ENCODE measurements at regions of chr14 and their contacts with region 1.

Region 1: DNA sequence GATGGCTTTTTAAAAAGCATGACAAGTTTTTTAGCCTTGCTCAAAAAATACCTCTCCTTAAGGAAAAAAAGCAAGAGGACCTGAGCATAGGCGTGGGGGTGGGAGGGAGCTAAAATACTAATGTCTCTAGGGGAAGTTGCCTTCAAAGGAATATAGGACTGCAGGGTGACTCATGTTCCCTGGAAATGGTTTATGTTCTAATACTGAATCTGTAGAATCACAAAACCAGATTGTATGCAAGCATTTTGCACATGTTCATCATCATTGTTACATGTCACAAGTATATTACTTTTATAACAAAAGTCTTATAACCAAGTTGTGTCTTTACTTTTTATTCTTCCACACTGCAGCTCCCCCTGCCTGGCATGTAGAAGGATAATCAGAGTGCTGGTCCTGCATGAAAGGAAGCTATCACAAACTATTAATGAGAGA is 36.6 kb downstream of the GPR135 start:
- DNase-seq: no peak
- H3K4me3 ChIP-seq: no peak overlapping the region
- H3K27ac ChIP-seq: peak overlapping the region; percentile 80
- H3K4me1 ChIP-seq: peaks cover 54% of the 10 kb centered on the region
- H3K27me3 ChIP-seq: no peaks in the 10 kb centered on the region
- CTCF ChIP-seq: peak; percentile 58

Region 2: GRCh38 chr14:59377991-59378601 is 50.5 kb before region 1 on chr14:
- intact Hi-C with region 1: loop called (anchors 10 kb)
- DNase-seq: no peak
- H3K4me3 ChIP-seq: no peak overlapping the region
- H3K27ac ChIP-seq: peak overlapping the region; percentile 70
- H3K4me1 ChIP-seq: peaks cover 39% of the 10 kb centered on the region
- H3K27me3 ChIP-seq: no peaks in the 10 kb centered on the region
- CTCF ChIP-seq: no peak

Region 3: GRCh38 chr14:59507063-59507780 is 78.6 kb after region 1 on chr14:
- intact Hi-C with region 1: no loop called
- DNase-seq: peak; percentile 24
- H3K4me3 ChIP-seq: no peak overlapping the region
- H3K27ac ChIP-seq: no peak overlapping the region
- H3K4me1 ChIP-seq: no peaks in the 10 kb centered on the region
- H3K27me3 ChIP-seq: peaks cover 15% of the 10 kb centered on the region
- CTCF ChIP-seq: peak; percentile 77